Heart left ventricle (tissue), 16 donors: ENCODE measurements at regions of chr14 and their contacts with region 1.

Region 1: GRCh38 chr14:75720842-75721498 is 59.9 kb downstream of the TTLL5 start:
- DNase-seq: peak in 4 of 5 donors; percentile 56 to 65 (median 60)
- ATAC-seq: peak; percentile 74 to 87 (median 77)
- H3K4me3 ChIP-seq: peak overlapping the region in 5 of 12 donors; percentile 9 to 31 (median 22)
- H3K27ac ChIP-seq: peak overlapping the region; percentile 26 to 79 (median 66)
- H3K4me1 ChIP-seq: peaks cover 3 to 56% (median 27%) of the 10 kb centered on the region in 12 donors
- H3K27me3 ChIP-seq: no peaks in the 10 kb centered on the region
- CTCF ChIP-seq: no peak
- POLR2A ChIP-seq: no peak

Region 2: GRCh38 chr14:75542588-75543091 is 178.3 kb before region 1 on chr14:
- intact Hi-C with region 1: no loop called
- DNase-seq: peak; percentile 57 to 81 (median 67)
- ATAC-seq: peak; percentile 76 to 96 (median 88)
- H3K4me3 ChIP-seq: peak overlapping the region in 1 of 12 donors; percentile 33
- H3K27ac ChIP-seq: peak overlapping the region in 5 of 12 donors; percentile 2 to 91 (median 21)
- H3K4me1 ChIP-seq: peaks cover 0 to 40% (median 0%) of the 10 kb centered on the region in 12 donors
- H3K27me3 ChIP-seq: no peaks in the 10 kb centered on the region
- CTCF ChIP-seq: no peak
- POLR2A ChIP-seq: no peak

Region 3: DNA sequence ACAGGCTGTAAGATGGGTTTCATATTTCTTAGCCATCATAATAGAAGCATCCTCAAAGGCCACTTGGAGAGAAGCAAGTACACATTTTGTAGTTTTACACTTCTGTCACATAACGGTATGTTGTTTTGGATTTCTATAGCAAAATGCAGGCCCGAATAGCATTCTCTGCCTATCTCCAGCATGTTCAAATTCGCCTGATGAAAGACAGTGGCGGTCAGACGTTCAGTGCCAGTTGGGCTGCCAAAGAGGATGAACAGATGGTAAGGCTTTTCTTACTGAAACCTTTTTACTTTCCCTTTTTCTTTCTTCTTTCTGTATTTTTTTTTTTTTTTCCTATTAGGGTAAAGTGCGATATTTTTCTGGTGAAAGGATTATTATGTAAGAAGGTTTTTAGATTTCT is 50.6 kb after region 1 on chr14:
- intact Hi-C with region 1: loop called in 1 of 10 experiments (anchors 10 kb)
- DNase-seq: no peak
- ATAC-seq: no peak
- H3K4me3 ChIP-seq: no peak overlapping the region
- H3K27ac ChIP-seq: no peak overlapping the region
- H3K4me1 ChIP-seq: peaks cover 0 to 13% (median 0%) of the 10 kb centered on the region in 12 donors
- H3K27me3 ChIP-seq: no peaks in the 10 kb centered on the region
- CTCF ChIP-seq: no peak
- POLR2A ChIP-seq: no peak

Region 4: GRCh38 chr14:76102011-76102379 is 381.0 kb after region 1 on chr14:
- intact Hi-C with region 1: no loop called
- DNase-seq: no peak
- ATAC-seq: no peak
- H3K4me3 ChIP-seq: no peak overlapping the region
- H3K27ac ChIP-seq: peak overlapping the region in 1 of 12 donors; percentile 36
- H3K4me1 ChIP-seq: peaks cover 0 to 22% (median 2%) of the 10 kb centered on the region in 12 donors
- H3K27me3 ChIP-seq: peaks cover 0 to 8% (median 0%) of the 10 kb centered on the region in 9 donors
- CTCF ChIP-seq: no peak
- POLR2A ChIP-seq: no peak